ENCODE measurements at regions of chr7 and their contacts with region 1.

Region 1: DNA sequence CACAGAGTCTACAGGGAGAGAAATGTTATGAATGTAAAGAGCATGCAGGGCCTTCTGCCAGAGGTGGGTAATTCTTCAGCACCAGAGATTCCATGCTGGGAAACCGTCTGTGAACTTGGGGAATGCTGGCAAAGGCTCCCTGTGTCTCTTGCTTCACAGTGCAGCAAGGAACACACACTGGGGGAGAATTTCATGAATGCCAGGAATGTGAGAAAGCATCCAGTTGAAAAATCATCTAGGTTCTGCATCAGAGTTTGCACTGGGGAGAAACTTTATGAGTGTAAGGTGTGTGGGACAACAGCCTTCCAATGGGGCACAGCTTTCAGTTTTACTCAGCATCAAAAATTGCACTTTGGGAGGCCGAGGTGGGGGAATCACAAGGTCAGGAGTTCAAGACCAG is 224.3 kb upstream of the IGFBP3 start:
- DNase-seq: peak; percentile 99
- ATAC-seq: peak; percentile 93
- H3K4me3 ChIP-seq: no peak overlapping the region
- H3K27ac ChIP-seq: peak overlapping the region; percentile 64
- H3K4me1 ChIP-seq: peaks cover 23% of the 10 kb centered on the region
- H3K27me3 ChIP-seq: no peaks in the 10 kb centered on the region
- CTCF ChIP-seq: no peak
- POLR2A ChIP-seq: no peak
- RAD21 ChIP-seq: no peak

Region 2: DNA sequence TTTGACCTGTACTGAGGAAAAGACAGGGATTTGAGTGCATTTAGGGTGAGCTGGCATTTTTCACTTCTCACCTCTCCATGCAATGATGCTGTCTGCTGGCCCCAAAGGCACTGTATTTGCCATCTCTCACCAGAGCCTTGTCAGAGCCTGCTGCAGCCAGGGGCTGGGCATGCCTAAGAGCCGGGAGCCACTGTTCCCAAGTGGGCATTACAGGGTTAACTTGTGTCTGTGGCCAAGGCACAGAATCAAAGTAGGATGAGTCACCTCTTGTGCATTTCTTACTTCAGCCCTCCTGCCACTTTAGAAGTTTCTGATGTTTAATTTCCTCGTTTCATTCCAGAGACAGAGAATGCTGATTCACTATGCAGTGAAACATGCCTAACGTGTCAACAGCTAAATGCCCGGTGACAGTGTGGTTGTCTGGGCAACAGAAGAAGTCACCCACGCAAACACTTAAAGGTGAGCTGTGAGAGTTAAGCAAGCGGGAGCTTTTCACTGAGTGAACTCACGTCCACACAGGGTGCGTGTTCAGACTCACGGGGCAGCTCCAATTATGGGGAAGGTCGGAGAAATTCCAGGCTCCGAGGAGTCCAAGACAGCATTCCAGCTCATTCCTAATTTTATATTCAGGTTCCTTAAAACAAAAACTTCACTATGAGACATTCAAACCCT is 167.3 kb before region 1 on chr7:
- CTCF ChIA-PET with region 1: no interaction called
- POLR2A ChIA-PET with region 1: no interaction called
- dilution Hi-C with region 1: no loop called
- in situ Hi-C with region 1: no loop called
- intact Hi-C with region 1: loop called (anchors 5 kb)
- DNase-seq: peak; percentile 99
- ATAC-seq: peak; percentile 80
- H3K4me3 ChIP-seq: no peak overlapping the region
- H3K27ac ChIP-seq: peak overlapping the region; percentile 96
- H3K4me1 ChIP-seq: peaks cover 36% of the 10 kb centered on the region
- H3K27me3 ChIP-seq: no peaks in the 10 kb centered on the region
- CTCF ChIP-seq: no peak; the same call in 1 of the 2 replicates
- POLR2A ChIP-seq: peak; percentile 57; the same call in 1 of the 2 replicates
- RAD21 ChIP-seq: peak; percentile 31

Region 3: GRCh38 chr7:46191776-46192175 is 46.4 kb after region 1 on chr7:
- CTCF ChIA-PET with region 1: no interaction called
- POLR2A ChIA-PET with region 1: no interaction called
- dilution Hi-C with region 1: no loop called
- in situ Hi-C with region 1: no loop called
- intact Hi-C with region 1: loop called (anchors 1 kb)
- DNase-seq: peak; percentile 91
- ATAC-seq: peak; percentile 93
- H3K4me3 ChIP-seq: no peak overlapping the region
- H3K27ac ChIP-seq: peak overlapping the region; percentile 63; the same call in 1 of the 2 replicates
- H3K4me1 ChIP-seq: peaks cover 23% of the 10 kb centered on the region
- H3K27me3 ChIP-seq: no peaks in the 10 kb centered on the region
- CTCF ChIP-seq: no peak
- POLR2A ChIP-seq: no peak
- RAD21 ChIP-seq: no peak

Region 4: GRCh38 chr7:46352004-46352954 is 206.9 kb after region 1 on chr7:
- CTCF ChIA-PET with region 1: no interaction called
- POLR2A ChIA-PET with region 1: no interaction called
- dilution Hi-C with region 1: no loop called
- in situ Hi-C with region 1: no loop called
- intact Hi-C with region 1: loop called (anchors 5 kb)
- DNase-seq: peak; percentile 72
- ATAC-seq: peak; percentile 70
- H3K4me3 ChIP-seq: no peak overlapping the region
- H3K27ac ChIP-seq: no peak overlapping the region
- H3K4me1 ChIP-seq: peaks cover 6% of the 10 kb centered on the region; the same call in 1 of the 2 replicates
- H3K27me3 ChIP-seq: no peaks in the 10 kb centered on the region
- CTCF ChIP-seq: peak; percentile 83
- POLR2A ChIP-seq: no peak
- RAD21 ChIP-seq: peak; percentile 97

Region 5: DNA sequence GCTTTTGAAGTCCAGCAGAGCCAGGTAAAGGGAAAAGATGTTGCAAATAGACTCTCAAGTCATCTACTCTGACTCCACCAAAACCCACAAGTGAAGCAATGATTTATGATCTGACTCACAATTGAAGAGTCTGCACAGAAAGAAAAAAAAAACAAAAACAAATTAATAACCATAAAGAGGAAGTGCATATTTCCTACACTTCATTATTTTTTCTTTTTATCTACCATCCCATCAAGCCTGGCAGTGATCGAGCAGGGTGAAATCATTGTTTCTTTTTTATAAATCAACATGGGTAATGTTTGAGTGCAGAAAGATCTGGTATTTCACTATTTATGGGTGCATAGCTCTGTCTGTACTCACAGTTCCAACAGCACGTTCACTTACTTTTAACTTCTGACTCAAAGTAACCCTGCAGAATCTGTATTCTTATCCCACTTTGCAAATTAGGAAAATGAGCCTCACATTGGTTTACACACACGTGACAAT is 607.5 kb after region 1 on chr7:
- CTCF ChIA-PET with region 1: no interaction called
- POLR2A ChIA-PET with region 1: no interaction called
- dilution Hi-C with region 1: no loop called
- in situ Hi-C with region 1: no loop called
- intact Hi-C with region 1: loop called (anchors 10 kb)
- DNase-seq: peak; percentile 77
- ATAC-seq: peak; percentile 74
- H3K4me3 ChIP-seq: no peak overlapping the region
- H3K27ac ChIP-seq: no peak overlapping the region
- H3K4me1 ChIP-seq: peaks cover 12% of the 10 kb centered on the region
- H3K27me3 ChIP-seq: no peaks in the 10 kb centered on the region
- CTCF ChIP-seq: no peak
- POLR2A ChIP-seq: no peak
- RAD21 ChIP-seq: no peak

Measured in IMR-90 (cell line).